ENCODE measurements at regions of chr9 and their contacts with region 1.

Region 1: DNA sequence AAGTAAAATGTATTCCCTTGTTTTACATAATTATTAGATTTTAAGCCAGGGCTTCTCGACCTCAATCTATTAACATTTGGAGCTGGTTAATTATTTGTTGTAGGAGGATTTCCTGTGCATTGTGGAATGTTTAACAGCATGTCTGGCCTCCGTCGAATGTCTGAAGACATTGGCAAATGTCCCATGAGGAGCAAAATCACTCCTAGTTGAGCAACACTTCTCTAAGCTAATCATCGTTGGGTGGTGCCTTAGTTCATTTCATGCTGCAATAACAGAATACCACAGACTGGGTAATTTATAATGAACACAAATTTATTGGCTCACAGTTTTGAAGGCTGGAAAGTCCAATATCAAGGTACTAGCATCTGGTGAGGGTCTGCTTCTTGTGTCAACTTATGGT is 13.4 kb upstream of the VPS13A start:
- DNase-seq: no peak
- H3K4me3 ChIP-seq: no peak overlapping the region
- H3K27ac ChIP-seq: no peak overlapping the region
- H3K4me1 ChIP-seq: no peaks in the 10 kb centered on the region
- H3K27me3 ChIP-seq: no peaks in the 10 kb centered on the region
- CTCF ChIP-seq: no peak

Region 2: DNA sequence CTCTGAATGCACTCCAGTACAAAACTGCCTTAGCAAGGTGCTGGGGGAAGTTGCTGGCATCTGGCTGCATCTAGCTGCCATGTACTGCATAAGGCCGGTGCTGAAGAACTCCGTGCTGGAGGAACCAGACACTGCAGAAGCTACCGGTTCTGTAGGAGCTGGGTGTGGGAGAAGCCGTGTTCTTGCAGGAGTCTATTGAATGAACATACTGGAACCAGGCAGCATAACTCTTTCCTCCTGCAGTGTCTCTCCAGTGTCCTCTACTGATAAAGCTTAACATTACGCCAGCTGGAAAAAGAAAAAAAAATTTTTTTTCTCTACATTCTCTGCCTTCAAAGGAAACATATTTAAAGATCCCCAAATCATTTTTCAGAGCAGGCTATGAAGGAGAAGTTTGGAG is 52.0 kb after region 1 on chr9:
- intact Hi-C with region 1: loop called (anchors 10 kb)
- DNase-seq: no peak
- H3K4me3 ChIP-seq: no peak overlapping the region
- H3K27ac ChIP-seq: no peak overlapping the region
- H3K4me1 ChIP-seq: no peaks in the 10 kb centered on the region
- H3K27me3 ChIP-seq: no peaks in the 10 kb centered on the region
- CTCF ChIP-seq: no peak